AG04449 (cell line): ENCODE measurements at regions of chr5 and their contacts with region 1.

Region 1: GRCh38 chr5:138503487-138504270 is 38.4 kb downstream of the EGR1 start:
- DNase-seq: no peak
- H3K4me3 ChIP-seq: no peak overlapping the region
- CTCF ChIP-seq: peak; percentile 71

Region 2: DNA sequence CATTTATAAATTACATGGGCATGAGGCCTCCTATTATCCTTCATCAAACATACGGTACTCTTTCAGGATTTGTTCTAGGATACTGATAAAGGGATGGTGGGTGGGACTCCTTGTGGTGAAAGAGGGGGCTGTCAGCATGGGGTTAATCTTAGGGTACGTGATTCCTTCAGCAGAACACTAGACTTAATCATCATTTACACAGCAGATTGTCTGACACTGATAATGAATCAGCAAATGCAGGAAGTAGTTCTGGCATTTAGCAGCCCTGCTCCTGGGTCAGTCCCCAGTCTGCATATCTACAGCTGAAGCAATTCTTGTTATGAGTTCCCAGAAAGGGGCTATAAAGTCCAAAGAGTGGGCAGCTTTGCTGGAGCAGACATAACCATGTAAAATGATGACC is 1389.2 kb before region 1 on chr5:
- CTCF ChIA-PET with region 1: no interaction called
- POLR2A ChIA-PET with region 1: no interaction called
- DNase-seq: peak; percentile 24
- H3K4me3 ChIP-seq: no peak overlapping the region
- CTCF ChIP-seq: peak; percentile 1

Region 3: GRCh38 chr5:138438724-138439476 is 64.8 kb before region 1 on chr5 and contains the start of gene REEP2:
- CTCF ChIA-PET with region 1: interaction called, 407 read pairs
- POLR2A ChIA-PET with region 1: no interaction called
- DNase-seq: no peak
- H3K4me3 ChIP-seq: peak within 1 kb of the TSS; percentile 65
- CTCF ChIP-seq: no peak

Region 4: DNA sequence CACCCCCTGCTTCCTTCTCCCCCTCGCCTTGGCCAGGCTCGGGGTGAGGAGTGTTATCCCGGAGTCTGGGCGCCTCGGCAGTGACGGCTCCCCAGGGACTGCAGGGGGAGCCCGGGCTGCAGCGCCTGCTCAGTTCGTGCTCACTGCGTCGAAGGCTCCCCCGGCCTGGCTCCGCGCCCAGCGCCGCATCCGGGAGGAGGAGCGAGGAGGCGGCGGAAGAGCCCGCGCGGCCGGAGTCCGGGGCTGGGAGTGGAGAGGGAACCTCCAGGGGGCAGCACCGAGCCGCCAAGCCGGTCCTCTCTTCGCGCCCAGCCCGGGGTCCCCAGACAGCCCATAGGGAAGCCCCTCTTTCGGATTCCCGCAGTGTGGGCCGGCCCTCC is 39.7 kb before region 1 on chr5:
- CTCF ChIA-PET with region 1: interaction called, 407 read pairs
- POLR2A ChIA-PET with region 1: interaction called, 22 read pairs
- DNase-seq: no peak
- H3K4me3 ChIP-seq: peak overlapping the region; percentile 82
- CTCF ChIP-seq: peak; percentile 87

Region 5: DNA sequence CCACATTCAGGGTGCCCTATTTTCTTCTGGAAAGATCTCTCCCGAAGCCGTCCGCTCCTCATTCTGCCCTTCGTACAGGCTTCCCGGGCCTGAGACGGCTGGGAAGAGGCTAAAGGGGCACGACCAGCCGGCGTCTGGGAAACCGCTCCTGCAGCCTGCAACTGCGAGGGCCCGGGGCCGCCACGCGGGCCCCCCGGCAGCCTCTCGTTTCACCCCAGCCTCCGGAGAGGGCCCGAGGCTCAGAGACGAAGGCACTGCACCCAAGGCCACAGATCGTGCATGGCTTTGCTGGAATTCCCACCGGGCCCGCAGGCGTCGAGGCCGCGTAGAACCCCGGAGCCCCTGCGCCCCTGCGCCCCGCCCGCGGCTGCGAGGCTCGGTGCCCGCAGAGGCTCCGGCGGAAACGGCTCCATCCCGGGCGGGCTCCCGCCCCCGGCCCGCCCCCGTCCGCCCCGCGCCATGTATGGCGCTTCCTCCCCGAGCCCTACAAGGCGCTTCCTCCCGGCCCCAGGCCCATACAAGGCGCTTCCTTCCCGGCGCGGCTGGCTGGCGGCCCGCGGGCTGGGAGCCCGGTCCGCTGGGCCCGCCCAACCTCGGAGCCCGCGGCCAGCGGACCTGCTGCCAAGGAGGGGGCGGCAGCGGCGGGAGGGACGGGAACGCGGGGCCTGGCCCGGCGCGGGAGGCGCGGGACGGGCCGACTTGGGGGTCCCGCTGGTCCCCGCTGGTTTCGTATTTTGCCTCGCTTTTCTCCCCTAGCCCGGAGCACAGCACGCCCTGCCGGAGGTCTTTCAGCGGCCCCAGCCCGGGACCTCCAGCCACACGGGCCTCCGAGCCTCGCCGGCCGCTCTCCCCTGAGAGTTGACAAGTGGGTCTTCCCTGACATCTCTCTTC is 11.8 kb before region 1 on chr5:
- CTCF ChIA-PET with region 1: interaction called, 42 read pairs
- POLR2A ChIA-PET with region 1: no interaction called
- DNase-seq: no peak
- H3K4me3 ChIP-seq: peak overlapping the region; percentile 62
- CTCF ChIP-seq: no peak

Region 6: DNA sequence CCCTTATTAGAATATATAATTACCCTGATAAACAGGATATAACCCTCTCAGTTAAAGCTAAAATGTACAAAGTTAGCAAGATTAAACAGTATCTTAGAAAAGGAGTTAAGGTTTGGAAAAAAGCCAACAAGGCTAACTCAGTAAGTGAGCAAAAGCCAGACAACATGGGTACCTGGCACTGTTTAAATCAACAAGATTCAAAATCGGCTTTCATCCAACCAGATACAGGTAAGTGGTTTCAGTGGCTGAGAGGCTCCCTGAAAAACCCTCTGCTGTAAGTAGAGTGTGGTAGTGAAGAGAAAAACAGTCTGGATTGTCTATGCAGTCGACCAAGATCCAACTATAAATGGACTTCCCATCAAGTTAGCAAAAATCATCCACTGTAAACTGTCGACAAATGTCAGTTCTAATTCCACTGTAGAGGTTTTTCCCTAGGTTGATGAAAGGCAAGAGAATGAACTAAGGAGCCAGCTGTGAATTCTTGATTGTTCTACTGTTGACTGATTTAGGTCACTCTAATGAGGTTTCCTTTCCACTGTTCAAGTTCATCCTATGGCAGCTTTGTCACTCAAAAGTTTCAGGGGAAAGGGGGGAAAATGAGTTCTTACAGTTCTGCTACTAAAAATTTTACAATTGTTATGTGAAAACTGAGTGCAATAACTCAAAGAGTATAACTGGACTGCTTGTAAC is 12.0 kb after region 1 on chr5:
- CTCF ChIA-PET with region 1: interaction called, 55 read pairs
- POLR2A ChIA-PET with region 1: no interaction called
- DNase-seq: no peak
- H3K4me3 ChIP-seq: no peak overlapping the region
- CTCF ChIP-seq: no peak

Region 7: GRCh38 chr5:138528208-138528607 is 24.5 kb after region 1 on chr5:
- CTCF ChIA-PET with region 1: interaction called, 15 read pairs
- POLR2A ChIA-PET with region 1: no interaction called
- DNase-seq: no peak
- H3K4me3 ChIP-seq: no peak overlapping the region
- CTCF ChIP-seq: no peak

Region 8: DNA sequence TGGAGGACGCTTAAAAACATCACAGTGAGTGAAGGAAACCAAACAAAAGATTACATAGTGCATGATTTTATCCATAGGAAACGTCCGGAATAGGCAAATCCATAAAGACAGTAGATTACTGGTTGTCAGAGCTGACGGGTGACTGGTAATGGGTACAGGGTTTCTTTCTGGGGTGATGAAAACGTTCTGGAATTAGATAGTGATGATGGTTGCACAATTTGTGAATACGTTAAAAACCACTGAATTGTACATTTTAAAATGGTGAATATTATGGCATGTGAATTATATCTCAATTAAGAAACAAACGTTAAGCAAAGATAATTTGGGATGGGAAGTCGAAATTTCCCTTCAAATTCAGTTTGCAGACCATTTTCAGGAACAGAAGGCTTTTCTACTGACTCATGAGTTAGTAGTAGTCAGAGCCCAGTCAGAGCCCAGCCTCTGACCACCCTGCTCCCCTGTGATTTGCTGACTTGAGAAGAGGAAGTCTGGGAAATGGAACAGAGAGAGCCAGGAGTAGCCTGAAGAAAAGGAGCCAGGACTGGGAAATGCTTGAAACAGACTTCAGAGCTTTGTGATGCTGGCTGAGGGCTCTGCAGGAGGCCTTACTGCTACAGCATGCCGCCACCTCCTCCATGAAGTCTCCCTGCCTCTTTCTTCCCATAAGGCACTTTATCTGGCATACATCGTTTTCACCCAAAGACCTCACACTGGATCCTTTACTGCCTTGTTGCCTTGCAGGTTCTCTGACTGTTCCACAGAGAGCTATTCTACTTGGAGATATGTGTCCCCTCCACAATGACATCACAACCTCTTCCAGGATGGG is 203.2 kb after region 1 on chr5:
- CTCF ChIA-PET with region 1: no interaction called
- POLR2A ChIA-PET with region 1: no interaction called
- DNase-seq: peak; percentile 58
- H3K4me3 ChIP-seq: no peak overlapping the region
- CTCF ChIP-seq: no peak